ENCODE measurements at regions of chr3 and their contacts with region 1.

Region 1: DNA sequence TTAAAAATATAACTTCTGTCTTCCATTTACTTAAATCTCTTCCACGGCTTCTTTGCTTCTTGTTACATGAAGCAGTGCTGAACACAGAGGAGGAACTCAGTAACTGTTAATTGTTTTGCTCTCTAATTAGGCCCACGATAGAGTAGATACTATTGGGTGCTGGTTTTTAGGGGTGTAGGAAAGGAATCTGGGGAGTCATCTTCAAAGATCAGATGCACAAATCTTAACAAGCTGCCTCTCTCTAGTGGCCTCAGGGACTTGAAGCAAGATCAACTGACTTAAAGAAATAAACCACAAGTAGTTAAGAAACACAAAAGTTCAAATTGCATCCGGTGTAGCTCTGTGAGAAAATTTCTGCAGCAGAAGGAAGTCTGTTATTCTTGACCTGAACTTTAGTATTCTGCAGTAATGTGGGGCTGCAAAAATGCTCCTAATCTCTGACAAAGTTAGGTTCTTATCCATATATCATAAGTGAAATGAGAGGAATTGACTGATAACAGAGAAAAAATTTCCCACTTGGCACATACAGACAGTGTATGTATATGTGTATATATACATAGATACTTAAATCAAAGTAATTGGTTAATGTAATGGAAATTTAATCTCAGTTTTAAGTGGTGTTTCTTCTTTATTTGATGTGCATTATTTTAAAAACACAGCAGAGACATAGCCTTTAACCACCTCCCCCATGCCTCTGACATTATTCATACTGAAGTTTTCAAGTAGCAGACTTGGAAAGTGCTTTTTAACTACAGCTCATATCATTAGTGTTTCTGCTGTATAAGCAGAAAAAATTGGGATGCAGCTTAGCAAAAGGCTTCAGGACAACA is 51.8 kb downstream of the CHST2 start:
- DNase-seq: peak; percentile 28
- H3K4me3 Mint-ChIP-seq: peak overlapping the region; percentile 24
- H3K27ac Mint-ChIP-seq: peak overlapping the region; percentile 88
- H3K4me1 Mint-ChIP-seq: peaks cover 46% of the 10 kb centered on the region
- H3K27me3 Mint-ChIP-seq: no peaks in the 10 kb centered on the region

Region 2: DNA sequence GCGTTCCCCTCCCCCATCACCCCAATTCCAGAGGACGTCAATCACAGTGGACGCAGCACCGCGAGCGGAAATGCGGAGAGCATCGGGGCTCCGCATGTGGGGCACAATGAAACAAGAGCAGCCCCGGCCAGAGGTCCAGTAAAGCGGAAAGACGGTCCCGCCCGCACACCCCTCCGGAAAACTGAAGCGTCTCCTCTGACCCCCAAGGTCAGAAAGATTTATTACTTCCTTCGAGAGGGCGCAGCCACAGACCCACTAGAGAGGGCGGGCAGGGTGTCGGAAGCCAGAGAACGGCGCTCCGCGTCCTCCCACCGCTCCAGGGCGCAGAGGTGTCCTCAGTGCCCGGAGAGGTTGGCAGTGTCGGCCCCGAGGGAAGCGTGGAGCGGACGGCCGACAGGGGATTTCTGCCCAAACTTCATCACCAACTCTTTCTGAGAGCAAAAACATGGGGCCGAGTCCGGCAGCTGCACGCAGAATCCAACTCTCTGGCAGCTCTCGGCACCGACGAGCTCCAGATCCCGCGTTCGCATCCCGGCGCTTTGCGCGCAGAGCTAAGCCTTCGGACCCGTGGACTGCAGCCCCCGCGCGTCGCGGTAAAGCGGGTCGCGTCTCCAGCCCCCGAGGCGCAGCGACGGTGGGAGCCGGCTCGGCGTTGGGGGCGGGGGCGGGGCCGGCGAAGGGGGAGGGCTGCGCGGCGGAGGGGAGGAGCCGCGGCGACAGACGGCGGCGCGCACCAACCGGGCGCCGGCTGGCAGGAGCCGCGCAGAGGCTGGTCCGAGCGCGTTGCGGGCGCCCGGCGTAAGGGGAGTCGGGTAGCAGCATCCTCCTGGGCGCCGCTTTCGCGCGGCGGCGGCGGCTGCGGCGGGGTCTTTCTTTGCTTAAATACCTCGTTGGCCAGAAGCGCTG is 52.1 kb before region 1 on chr3 and contains the start of gene CHST2:
- CTCF ChIA-PET with region 1: interaction called, 20 read pairs
- DNase-seq: peak; percentile 75
- H3K4me3 Mint-ChIP-seq: peak within 1 kb of the TSS; percentile 85
- H3K27ac Mint-ChIP-seq: no peak within 1 kb of the TSS
- H3K4me1 Mint-ChIP-seq: peaks cover 28% of the 10 kb centered on the region
- H3K27me3 Mint-ChIP-seq: peaks cover 49% of the 10 kb centered on the region

Region 3: GRCh38 chr3:143124601-143125520 is 46.5 kb before region 1 on chr3:
- CTCF ChIA-PET with region 1: interaction called, 20 read pairs
- DNase-seq: no peak
- H3K4me3 Mint-ChIP-seq: no peak overlapping the region
- H3K27ac Mint-ChIP-seq: peak overlapping the region; percentile 63
- H3K4me1 Mint-ChIP-seq: peaks cover 21% of the 10 kb centered on the region
- H3K27me3 Mint-ChIP-seq: peaks cover 19% of the 10 kb centered on the region

Region 4: DNA sequence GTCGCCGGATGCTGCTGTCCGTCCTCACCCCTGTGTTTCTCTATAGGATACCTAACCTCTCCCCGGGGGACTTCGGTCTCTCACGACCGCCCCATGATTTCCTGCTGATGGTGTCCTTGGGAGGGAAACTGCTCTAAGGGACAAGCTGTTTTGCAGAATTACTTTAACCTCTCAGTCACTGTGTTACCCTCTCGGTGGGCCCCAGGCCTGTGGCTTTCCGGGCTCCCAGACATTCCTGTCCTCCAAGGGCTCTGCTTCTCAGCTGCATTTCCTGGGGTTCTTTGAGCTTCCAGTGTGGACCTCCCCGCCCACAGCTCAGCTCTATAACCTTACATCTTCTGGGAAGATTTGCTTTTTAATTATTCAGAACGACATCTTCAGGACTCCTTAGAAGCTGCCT is 10.9 kb before region 1 on chr3:
- CTCF ChIA-PET with region 1: interaction called, 12 read pairs
- DNase-seq: no peak
- H3K4me3 Mint-ChIP-seq: no peak overlapping the region
- H3K27ac Mint-ChIP-seq: no peak overlapping the region
- H3K4me1 Mint-ChIP-seq: peaks cover 28% of the 10 kb centered on the region
- H3K27me3 Mint-ChIP-seq: no peaks in the 10 kb centered on the region